Naive thymus-derived CD4-positive, alpha-beta T cell (primary cell): ENCODE measurements at regions of chr15 and their contacts with region 1.

Region 1: DNA sequence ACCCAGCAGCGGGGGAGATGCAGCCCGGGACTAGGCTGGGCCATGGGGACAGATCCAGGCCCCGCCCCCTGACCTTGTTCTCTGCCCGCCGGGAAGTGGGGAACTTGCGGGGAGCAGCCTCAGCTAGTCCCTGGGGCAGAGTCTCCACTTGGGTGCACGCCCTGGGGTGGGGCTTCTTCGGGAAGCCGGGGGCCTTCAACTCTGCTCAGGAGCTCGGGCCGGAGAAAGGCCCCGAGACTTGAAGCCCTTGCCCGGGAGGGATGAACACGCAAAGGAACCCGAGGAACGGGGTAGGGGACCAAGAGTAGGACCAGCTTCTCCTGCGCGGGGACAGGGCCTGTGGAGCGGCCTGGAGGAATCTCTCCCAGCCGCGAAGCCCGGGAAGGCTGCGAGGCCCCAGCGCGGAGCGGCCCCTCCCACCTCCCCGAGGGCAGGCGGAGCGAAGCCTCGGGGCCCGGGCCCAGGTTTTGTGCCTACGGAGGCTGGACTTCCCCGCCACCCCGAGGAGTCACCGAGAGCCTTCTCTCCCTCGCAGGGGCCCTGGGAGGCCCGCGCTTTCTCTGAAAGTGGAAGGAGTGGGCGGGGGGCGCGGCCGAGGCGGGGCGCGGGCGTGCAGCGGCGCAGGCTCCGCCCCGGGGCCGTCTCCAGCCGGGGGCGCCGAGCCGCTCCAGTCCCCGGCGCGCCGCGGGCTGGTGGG is at the start of gene ITPKA:
- DNase-seq: peak; percentile 55 to 95 (median 67)
- ATAC-seq: peak; percentile 93
- H3K4me3 ChIP-seq: peak within 1 kb of the TSS; percentile 70
- H3K4me3 Mint-ChIP-seq: peak within 1 kb of the TSS; percentile 74 to 91 (median 87)
- H3K27ac ChIP-seq: peak within 1 kb of the TSS; percentile 29
- H3K27ac Mint-ChIP-seq: peak within 1 kb of the TSS in 4 of 9 donors; percentile 26 to 62 (median 57)
- H3K4me1 ChIP-seq: peaks cover 11 to 20% of the 10 kb centered on the region in 2 donors
- H3K4me1 Mint-ChIP-seq: peaks cover 6 to 35% (median 8%) of the 10 kb centered on the region in 7 donors
- H3K27me3 ChIP-seq: peaks cover 0 to 8% of the 10 kb centered on the region in 2 donors
- H3K27me3 Mint-ChIP-seq: peaks cover 33 to 44% (median 41%) of the 10 kb centered on the region in 5 donors
- total RNA-seq, gene ITPKA: 0.20 to 0.97 TPM in 2 of 5 experiments, not detected in the others

Region 2: GRCh38 chr15:40550341-40551037 is 942.9 kb before region 1 on chr15:
- CTCF ChIA-PET with region 1: no interaction called
- POLR2A ChIA-PET with region 1: no interaction called
- intact Hi-C with region 1: no loop called
- DNase-seq: no peak
- ATAC-seq: peak; percentile 64
- H3K4me3 ChIP-seq: no peak overlapping the region
- H3K4me3 Mint-ChIP-seq: no peak overlapping the region
- H3K27ac ChIP-seq: no peak overlapping the region
- H3K27ac Mint-ChIP-seq: no peak overlapping the region
- H3K4me1 ChIP-seq: no peaks in the 10 kb centered on the region
- H3K4me1 Mint-ChIP-seq: peaks cover 0 to 8% (median 0%) of the 10 kb centered on the region in 7 donors
- H3K27me3 ChIP-seq: no peaks in the 10 kb centered on the region
- H3K27me3 Mint-ChIP-seq: no peaks in the 10 kb centered on the region

Region 3: DNA sequence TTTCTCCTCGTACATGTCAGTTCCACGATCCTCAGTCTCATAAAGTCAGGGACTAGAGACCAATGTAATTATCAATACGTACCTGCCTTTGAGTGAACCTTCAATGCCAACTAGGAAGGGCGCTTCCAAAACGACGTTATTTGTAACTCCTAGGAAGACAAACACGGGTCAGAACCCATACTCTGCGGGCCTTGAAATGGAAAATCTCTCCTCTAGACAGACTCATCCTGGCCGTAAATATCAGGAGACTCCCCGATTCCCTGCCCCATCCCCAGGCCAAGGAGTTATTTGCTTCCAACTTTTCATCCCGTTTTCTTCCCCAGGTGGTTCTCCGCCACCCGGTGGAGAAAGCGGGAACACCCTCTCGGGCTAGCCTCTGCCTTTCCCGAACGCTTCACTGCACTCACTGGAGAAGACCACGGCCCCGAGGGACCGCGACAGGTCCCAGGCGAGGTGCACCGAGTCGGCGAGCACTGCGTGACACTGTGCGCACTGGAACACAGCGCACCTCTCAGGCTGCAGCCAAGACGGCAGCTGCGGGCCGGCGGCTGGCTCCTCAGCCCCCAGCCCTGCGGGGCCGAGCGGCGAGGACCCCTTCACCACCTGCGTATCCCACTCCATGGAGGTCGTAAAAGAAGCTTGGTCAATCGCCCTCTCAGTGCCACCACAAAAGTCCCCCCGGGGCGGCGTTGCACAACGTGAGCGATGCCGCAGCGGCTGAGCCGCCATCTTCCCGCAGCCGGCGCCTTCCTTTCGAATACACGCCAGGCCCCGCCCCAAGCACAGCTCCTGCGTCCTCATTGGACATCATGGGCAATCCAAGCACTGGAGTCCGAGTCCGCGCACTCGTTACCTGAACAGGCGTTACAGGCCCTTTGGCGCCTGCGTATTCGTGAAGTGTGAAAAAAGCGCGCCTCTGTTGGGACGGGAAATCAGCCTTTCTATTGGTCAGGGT is 161.2 kb before region 1 on chr15 and contains the start of gene OIP5:
- CTCF ChIA-PET with region 1: no interaction called
- POLR2A ChIA-PET with region 1: no interaction called
- intact Hi-C with region 1: loop called in 1 of 2 experiments (anchors 2 kb)
- DNase-seq: peak; percentile 83 to 99 (median 97)
- ATAC-seq: peak; percentile 98
- H3K4me3 ChIP-seq: peak within 1 kb of the TSS; percentile 95
- H3K4me3 Mint-ChIP-seq: peak within 1 kb of the TSS; percentile 87 to 100 (median 97)
- H3K27ac ChIP-seq: peak within 1 kb of the TSS; percentile 52
- H3K27ac Mint-ChIP-seq: peak within 1 kb of the TSS; percentile 77 to 97 (median 91)
- H3K4me1 ChIP-seq: peaks cover 9 to 13% of the 10 kb centered on the region in 2 donors
- H3K4me1 Mint-ChIP-seq: peaks cover 12 to 32% (median 29%) of the 10 kb centered on the region in 7 donors
- H3K27me3 ChIP-seq: no peaks in the 10 kb centered on the region
- H3K27me3 Mint-ChIP-seq: no peaks in the 10 kb centered on the region
- total RNA-seq, gene OIP5: 0.32 to 15.2 (median 0.54) TPM in 4 of 5 experiments, not detected in the other

Region 4: GRCh38 chr15:41416742-41417406 is 76.5 kb before region 1 on chr15 and contains the start of gene RTF1:
- CTCF ChIA-PET with region 1: interaction called, 3 read pairs
- POLR2A ChIA-PET with region 1: no interaction called
- intact Hi-C with region 1: loop called (anchors 1 to 5 kb)
- DNase-seq: peak; percentile 92 to 100 (median 96)
- ATAC-seq: peak; percentile 99
- H3K4me3 ChIP-seq: peak within 1 kb of the TSS; percentile 98
- H3K4me3 Mint-ChIP-seq: peak within 1 kb of the TSS; percentile 86 to 96 (median 95)
- H3K27ac ChIP-seq: peak within 1 kb of the TSS; percentile 81
- H3K27ac Mint-ChIP-seq: peak within 1 kb of the TSS; percentile 74 to 98 (median 93)
- H3K4me1 ChIP-seq: peaks cover 6 to 16% of the 10 kb centered on the region in 2 donors
- H3K4me1 Mint-ChIP-seq: peaks cover 34 to 53% (median 43%) of the 10 kb centered on the region in 7 donors
- H3K27me3 ChIP-seq: no peaks in the 10 kb centered on the region
- H3K27me3 Mint-ChIP-seq: no peaks in the 10 kb centered on the region
- total RNA-seq, gene RTF1: 34.0 to 41.3 (median 37.2) TPM

Region 5: GRCh38 chr15:41465822-41466421 is 27.4 kb before region 1 on chr15:
- CTCF ChIA-PET with region 1: no interaction called
- POLR2A ChIA-PET with region 1: no interaction called
- intact Hi-C with region 1: no loop called
- DNase-seq: peak in 6 of 9 donors; percentile 12 to 43 (median 32)
- ATAC-seq: peak; percentile 75
- H3K4me3 ChIP-seq: no peak overlapping the region
- H3K4me3 Mint-ChIP-seq: no peak overlapping the region
- H3K27ac ChIP-seq: no peak overlapping the region
- H3K27ac Mint-ChIP-seq: peak overlapping the region in 2 of 9 donors; percentile 16 to 63
- H3K4me1 ChIP-seq: no peaks in the 10 kb centered on the region
- H3K4me1 Mint-ChIP-seq: peaks cover 0 to 7% (median 4%) of the 10 kb centered on the region in 7 donors
- H3K27me3 ChIP-seq: no peaks in the 10 kb centered on the region
- H3K27me3 Mint-ChIP-seq: no peaks in the 10 kb centered on the region

Region 6: DNA sequence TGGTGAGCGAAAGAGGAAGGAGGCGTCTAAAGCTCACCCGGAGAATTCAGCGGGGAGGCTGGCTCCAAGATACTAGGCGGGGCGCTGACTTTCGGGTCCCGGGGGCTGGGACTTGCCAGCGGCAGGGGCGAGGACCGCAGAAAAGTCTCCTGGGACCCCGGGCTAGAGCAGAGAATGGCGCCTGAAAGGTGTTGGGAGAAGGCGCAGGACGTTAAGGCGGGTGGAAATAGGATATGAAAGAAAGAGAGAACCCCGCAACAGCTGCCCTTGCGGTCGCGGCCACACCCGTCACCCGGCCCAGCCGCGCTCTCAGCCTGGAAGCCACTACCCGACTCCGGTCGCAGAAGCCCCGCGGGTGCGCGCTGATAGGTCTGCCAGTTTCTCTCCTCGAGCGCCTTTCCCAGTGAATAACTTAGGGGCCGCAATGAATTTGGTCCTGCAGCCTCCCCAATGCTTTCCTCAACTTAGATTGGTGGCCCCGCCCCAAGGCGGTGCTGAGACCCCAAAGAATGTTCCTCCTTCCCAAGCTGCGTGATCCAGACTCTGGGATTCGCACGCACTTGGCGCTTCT is 19.7 kb after region 1 on chr15:
- CTCF ChIA-PET with region 1: no interaction called
- POLR2A ChIA-PET with region 1: no interaction called
- intact Hi-C with region 1: loop called in 1 of 2 experiments (anchors 2 kb)
- DNase-seq: peak in 2 of 9 donors; percentile 33 to 34
- ATAC-seq: peak; percentile 63
- H3K4me3 ChIP-seq: peak overlapping the region; percentile 56
- H3K4me3 Mint-ChIP-seq: peak overlapping the region; percentile 48 to 84 (median 76)
- H3K27ac ChIP-seq: no peak overlapping the region
- H3K27ac Mint-ChIP-seq: no peak overlapping the region
- H3K4me1 ChIP-seq: peaks cover 9 to 22% of the 10 kb centered on the region in 2 donors
- H3K4me1 Mint-ChIP-seq: peaks cover 16 to 26% (median 24%) of the 10 kb centered on the region in 7 donors
- H3K27me3 ChIP-seq: peaks cover 8 to 18% of the 10 kb centered on the region in 2 donors
- H3K27me3 Mint-ChIP-seq: peaks cover 15 to 47% (median 17%) of the 10 kb centered on the region in 5 donors

Region 7: GRCh38 chr15:41544650-41545015 is 51.3 kb after region 1 on chr15:
- CTCF ChIA-PET with region 1: no interaction called
- POLR2A ChIA-PET with region 1: no interaction called
- intact Hi-C with region 1: loop called in 1 of 2 experiments (anchors 5 kb)
- DNase-seq: peak in 1 of 9 donors; percentile 1
- ATAC-seq: no peak
- H3K4me3 ChIP-seq: peak overlapping the region; percentile 96
- H3K4me3 Mint-ChIP-seq: peak overlapping the region; percentile 92 to 96 (median 94)
- H3K27ac ChIP-seq: peak overlapping the region; percentile 94
- H3K27ac Mint-ChIP-seq: peak overlapping the region in 8 of 9 donors; percentile 62 to 95 (median 92)
- H3K4me1 ChIP-seq: peaks cover 0 to 6% of the 10 kb centered on the region in 2 donors
- H3K4me1 Mint-ChIP-seq: peaks cover 0 to 31% (median 19%) of the 10 kb centered on the region in 7 donors
- H3K27me3 ChIP-seq: no peaks in the 10 kb centered on the region
- H3K27me3 Mint-ChIP-seq: peaks cover 0 to 4% (median 0%) of the 10 kb centered on the region in 5 donors